GM12878 (cell line): ENCODE measurements at regions of chr14 and their contacts with region 1.

Region 1: DNA sequence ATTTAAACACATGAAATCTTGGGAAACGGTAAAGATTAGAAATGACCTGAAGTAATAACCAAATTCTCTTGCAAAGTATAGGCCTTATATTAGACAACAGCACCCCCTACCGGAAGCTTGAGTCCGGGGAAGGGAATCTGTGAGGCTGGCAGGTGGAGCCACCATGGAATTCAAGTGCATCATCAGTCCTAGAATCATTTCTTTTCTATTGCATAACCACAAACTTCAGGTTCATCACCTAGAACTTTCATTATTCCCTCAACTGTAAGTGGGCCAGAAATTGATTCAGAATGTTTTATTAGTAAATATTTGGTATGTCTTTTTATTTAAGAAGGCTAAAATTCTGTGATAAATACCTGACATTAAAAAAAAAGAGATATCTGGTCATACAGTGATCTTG is 48.5 kb downstream of the AP5M1 start:
- DNase-seq: peak; percentile 16
- ATAC-seq: peak; percentile 87
- H3K4me3 ChIP-seq: no peak overlapping the region
- H3K27ac ChIP-seq: no peak overlapping the region
- H3K4me1 ChIP-seq: no peaks in the 10 kb centered on the region
- H3K27me3 ChIP-seq: no peaks in the 10 kb centered on the region; a peak in 3 of 4 replicates
- CTCF ChIP-seq: peak; percentile 70 to 90 (median 86)
- EP300 ChIP-seq: no peak
- POLR2A ChIP-seq: no peak
- RAD21 ChIP-seq: peak; percentile 91

Region 2: DNA sequence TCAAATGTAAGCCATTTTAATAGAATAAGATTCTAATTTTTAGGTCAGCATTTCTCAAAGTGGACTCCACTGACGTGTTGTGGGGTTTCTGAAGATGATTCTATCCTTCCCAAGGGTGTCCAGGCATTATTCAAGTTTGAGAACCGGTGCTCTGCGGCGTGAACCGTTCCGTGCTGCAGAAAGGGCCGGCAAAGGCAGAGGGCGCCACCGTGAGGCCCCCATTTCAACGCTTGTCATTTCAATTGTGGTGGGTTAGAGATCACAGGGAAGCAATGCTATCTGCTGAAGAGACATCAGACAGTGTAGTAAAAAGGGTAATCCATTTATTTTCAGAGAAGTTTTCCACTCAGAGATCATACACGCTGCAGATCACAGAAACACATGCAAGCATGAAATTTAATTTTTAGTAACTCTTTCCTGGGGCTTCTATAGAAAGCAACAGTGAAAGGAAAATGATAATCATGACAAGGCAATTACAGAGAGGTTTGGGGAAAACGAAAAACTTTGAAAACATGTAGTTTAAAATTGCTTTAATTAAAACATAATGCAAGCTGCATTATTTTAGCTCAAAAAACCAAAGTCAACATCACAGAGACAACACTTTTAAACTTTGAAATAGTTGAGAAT is 250.3 kb before region 1 on chr14:
- CTCF ChIA-PET with region 1: no interaction called
- POLR2A ChIA-PET with region 1: no interaction called
- RAD21 ChIA-PET with region 1: interaction called, 3 read pairs
- SMC1A ChIA-PET with region 1: no interaction called
- in situ Hi-C with region 1: loop called (anchors 10 kb)
- intact Hi-C with region 1: loop called (anchors 5 kb)
- DNase-seq: no peak
- ATAC-seq: peak; percentile 89
- H3K4me3 ChIP-seq: no peak overlapping the region
- H3K27ac ChIP-seq: no peak overlapping the region
- H3K4me1 ChIP-seq: no peaks in the 10 kb centered on the region
- H3K27me3 ChIP-seq: peaks cover 0 to 7% of the 10 kb centered on the region in 2 experiments; a peak in 1 of 4 replicates
- CTCF ChIP-seq: peak; percentile 67 to 77 (median 69)
- EP300 ChIP-seq: no peak
- POLR2A ChIP-seq: no peak
- RAD21 ChIP-seq: peak; percentile 79

Region 3: GRCh38 chr14:57293866-57294837 is 23.2 kb before region 1 on chr14:
- CTCF ChIA-PET with region 1: interaction called, 14 read pairs
- POLR2A ChIA-PET with region 1: no interaction called
- RAD21 ChIA-PET with region 1: no interaction called
- SMC1A ChIA-PET with region 1: interaction called, 3 read pairs
- in situ Hi-C with region 1: no loop called
- intact Hi-C with region 1: no loop called
- DNase-seq: no peak
- ATAC-seq: no peak
- H3K4me3 ChIP-seq: no peak overlapping the region
- H3K27ac ChIP-seq: no peak overlapping the region
- H3K4me1 ChIP-seq: no peaks in the 10 kb centered on the region
- H3K27me3 ChIP-seq: no peaks in the 10 kb centered on the region
- CTCF ChIP-seq: no peak; a peak in 2 of 6 replicates
- EP300 ChIP-seq: no peak
- POLR2A ChIP-seq: no peak
- RAD21 ChIP-seq: no peak

Region 4: GRCh38 chr14:57526942-57527341 is 209.6 kb after region 1 on chr14:
- CTCF ChIA-PET with region 1: no interaction called
- POLR2A ChIA-PET with region 1: no interaction called
- RAD21 ChIA-PET with region 1: no interaction called
- SMC1A ChIA-PET with region 1: no interaction called
- in situ Hi-C with region 1: no loop called
- intact Hi-C with region 1: no loop called
- DNase-seq: no peak
- ATAC-seq: peak; percentile 60
- H3K4me3 ChIP-seq: no peak overlapping the region
- H3K27ac ChIP-seq: no peak overlapping the region
- H3K4me1 ChIP-seq: no peaks in the 10 kb centered on the region
- H3K27me3 ChIP-seq: no peaks in the 10 kb centered on the region
- CTCF ChIP-seq: 0 out of 6 replicates have a peak, but pooled peaks of 1 of the 3 experiments have one; percentile 12
- EP300 ChIP-seq: no peak
- POLR2A ChIP-seq: no peak
- RAD21 ChIP-seq: no peak

Region 5: GRCh38 chr14:58072288-58073071 is 755.2 kb after region 1 on chr14:
- CTCF ChIA-PET with region 1: interaction called, 3 read pairs
- POLR2A ChIA-PET with region 1: no interaction called
- RAD21 ChIA-PET with region 1: no interaction called
- SMC1A ChIA-PET with region 1: no interaction called
- in situ Hi-C with region 1: no loop called
- intact Hi-C with region 1: loop called (anchors 5 kb)
- DNase-seq: peak; percentile 13
- ATAC-seq: peak; percentile 91
- H3K4me3 ChIP-seq: no peak overlapping the region
- H3K27ac ChIP-seq: no peak overlapping the region
- H3K4me1 ChIP-seq: no peaks in the 10 kb centered on the region
- H3K27me3 ChIP-seq: no peaks in the 10 kb centered on the region
- CTCF ChIP-seq: peak; percentile 57 to 70 (median 69); a peak in 5 of 6 replicates
- EP300 ChIP-seq: no peak
- POLR2A ChIP-seq: no peak
- RAD21 ChIP-seq: peak; percentile 82